ENCODE measurements at regions of chr6 and their contacts with region 1.

Region 1: GRCh38 chr6:158694913-158695312 is 45.1 kb downstream of the SYTL3 start:
- DNase-seq: peak in 1 of 7 donors; percentile 5
- H3K4me3 ChIP-seq: no peak overlapping the region
- H3K27ac ChIP-seq: no peak overlapping the region
- H3K4me1 ChIP-seq: no peaks in the 10 kb centered on the region
- H3K27me3 ChIP-seq: no peaks in the 10 kb centered on the region
- CTCF ChIP-seq: no peak
- POLR2A ChIP-seq: no peak

Region 2: GRCh38 chr6:158213925-158214674 is 480.8 kb before region 1 on chr6:
- intact Hi-C with region 1: loop called in 1 of 2 experiments (anchors 5 kb)
- DNase-seq: peak; percentile 61 to 89 (median 81)
- H3K4me3 ChIP-seq: no peak overlapping the region
- H3K27ac ChIP-seq: no peak overlapping the region
- H3K4me1 ChIP-seq: no peaks in the 10 kb centered on the region
- H3K27me3 ChIP-seq: no peaks in the 10 kb centered on the region
- CTCF ChIP-seq: peak; percentile 52 to 79 (median 72)
- POLR2A ChIP-seq: no peak

Region 3: GRCh38 chr6:158666628-158667359 is 28.1 kb before region 1 on chr6:
- intact Hi-C with region 1: no loop called
- DNase-seq: peak in 3 of 7 donors; percentile 42 to 59 (median 53)
- H3K4me3 ChIP-seq: no peak overlapping the region
- H3K27ac ChIP-seq: peak overlapping the region in 1 of 5 donors; percentile 51
- H3K4me1 ChIP-seq: peaks cover 0 to 12% of the 10 kb centered on the region in 2 donors
- H3K27me3 ChIP-seq: no peaks in the 10 kb centered on the region
- CTCF ChIP-seq: no peak
- POLR2A ChIP-seq: no peak

Measured in adrenal gland (tissue), 19 donors.